Activated CD4-positive, alpha-beta T cell treated with anti-CD3 and anti-CD28 coated beads, Interleukin-2, amount 10 ng/mL, durations not matched to agents 24 days and 14 days (primary cell): ENCODE measurements at regions of chr11 and their contacts with region 1.

Region 1: GRCh38 chr11:62880803-62881578 is at the start of gene SLC3A2:
- DNase-seq: peak; percentile 95
- H3K4me3 Mint-ChIP-seq: peak within 1 kb of the TSS; percentile 100
- H3K27ac Mint-ChIP-seq: peak within 1 kb of the TSS; percentile 100
- H3K4me1 Mint-ChIP-seq: peaks cover 53% of the 10 kb centered on the region
- H3K27me3 Mint-ChIP-seq: peaks cover 1% of the 10 kb centered on the region
- total RNA-seq, gene SLC3A2: 364 and 379 TPM in 2 replicates

Region 2: DNA sequence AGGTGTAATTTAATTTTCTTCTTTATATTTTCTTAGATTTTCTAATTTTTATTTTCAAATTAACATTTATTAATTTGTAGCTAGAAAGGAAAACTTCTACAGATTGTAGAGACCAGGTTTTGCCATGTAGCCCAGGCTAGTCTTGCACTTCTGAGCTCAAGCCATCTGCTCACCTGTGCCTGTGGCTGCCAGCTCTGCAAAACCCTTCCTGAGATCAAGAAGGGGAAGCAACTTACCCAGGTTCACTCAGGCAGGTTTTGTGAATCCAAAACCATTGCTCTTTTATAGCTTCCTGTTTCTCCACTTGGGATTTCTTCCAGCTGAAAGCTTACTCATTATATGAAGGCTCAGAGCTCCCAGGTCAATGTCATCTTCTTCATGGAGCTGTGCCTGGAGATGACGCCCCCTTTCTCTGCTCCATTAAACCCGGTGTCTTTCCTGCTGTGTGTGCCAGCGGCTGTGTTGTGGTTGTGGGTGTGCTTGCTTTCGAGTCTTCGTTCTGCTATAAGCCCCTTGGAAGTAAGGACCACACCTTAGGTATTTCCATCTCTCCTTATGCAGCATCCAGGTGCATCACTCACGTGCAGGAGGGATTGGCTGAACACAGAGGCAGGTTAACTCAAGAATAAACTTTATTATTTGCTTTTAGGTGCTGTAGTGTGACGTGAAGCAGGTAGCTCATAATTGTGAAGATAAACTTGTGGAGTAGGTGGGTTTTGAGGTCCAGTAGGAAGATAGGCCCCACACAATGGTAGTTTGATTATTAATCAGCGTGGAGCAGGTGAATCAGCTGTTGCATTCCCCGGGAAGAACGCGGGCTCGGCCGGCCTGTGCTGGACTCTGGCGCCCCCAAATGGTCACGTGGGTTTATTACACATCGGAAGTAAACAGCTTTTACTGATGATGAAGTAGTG is 799.4 kb before region 1 on chr11:
- intact Hi-C with region 1: no loop called
- DNase-seq: peak; percentile 93
- H3K4me3 Mint-ChIP-seq: peak overlapping the region; percentile 17
- H3K27ac Mint-ChIP-seq: no peak overlapping the region
- H3K4me1 Mint-ChIP-seq: peaks cover 6% of the 10 kb centered on the region
- H3K27me3 Mint-ChIP-seq: peaks cover 6% of the 10 kb centered on the region

Region 3: GRCh38 chr11:62591448-62592145 is 289.4 kb before region 1 on chr11 and contains the start of gene TUT1:
- intact Hi-C with region 1: loop called (anchors 1 kb)
- DNase-seq: peak; percentile 99
- H3K4me3 Mint-ChIP-seq: peak within 1 kb of the TSS; percentile 100
- H3K27ac Mint-ChIP-seq: peak within 1 kb of the TSS; percentile 99
- H3K4me1 Mint-ChIP-seq: peaks cover 38% of the 10 kb centered on the region
- H3K27me3 Mint-ChIP-seq: no peaks in the 10 kb centered on the region
- total RNA-seq, gene TUT1: 45.3 and 50.9 TPM in 2 replicates

Region 4: DNA sequence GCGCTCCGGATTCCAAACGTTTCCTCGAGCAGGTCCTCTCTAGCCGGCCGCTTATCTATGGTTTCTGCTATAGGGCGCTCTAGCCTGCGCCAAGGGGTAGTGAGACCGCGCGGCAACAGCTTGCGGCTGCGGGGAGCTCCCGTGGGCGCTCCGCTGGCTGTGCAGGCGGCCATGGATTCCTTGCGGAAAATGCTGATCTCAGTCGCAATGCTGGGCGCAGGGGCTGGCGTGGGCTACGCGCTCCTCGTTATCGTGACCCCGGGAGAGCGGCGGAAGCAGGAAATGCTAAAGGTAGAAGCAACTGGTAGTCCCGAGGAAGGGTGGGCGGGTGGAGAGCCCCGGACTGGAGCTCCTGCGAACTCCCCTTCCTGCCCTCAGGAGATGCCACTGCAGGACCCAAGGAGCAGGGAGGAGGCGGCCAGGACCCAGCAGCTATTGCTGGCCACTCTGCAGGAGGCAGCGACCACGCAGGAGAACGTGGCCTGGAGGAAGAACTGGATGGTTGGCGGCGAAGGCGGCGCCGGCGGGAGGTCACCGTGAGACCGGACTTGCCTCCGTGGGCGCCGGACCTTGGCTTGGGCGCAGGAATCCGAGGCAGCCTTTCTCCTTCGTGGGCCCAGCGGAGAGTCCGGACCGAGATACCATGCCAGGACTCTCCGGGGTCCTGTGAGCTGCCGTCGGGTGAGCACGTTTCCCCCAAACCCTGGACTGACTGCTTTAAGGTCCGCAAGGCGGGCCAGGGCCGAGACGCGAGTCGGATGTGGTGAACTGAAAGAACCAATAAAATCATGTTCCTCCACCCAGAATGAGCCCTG is 209.2 kb before region 1 on chr11 and contains the starts of genes LBHD1 and UQCC3:
- intact Hi-C with region 1: loop called (anchors 1 kb)
- DNase-seq: peak; percentile 94
- H3K4me3 Mint-ChIP-seq: peak within 1 kb of the TSS; percentile 88
- H3K27ac Mint-ChIP-seq: peak within 1 kb of the TSS; percentile 92
- H3K4me1 Mint-ChIP-seq: peaks cover 38% of the 10 kb centered on the region
- H3K27me3 Mint-ChIP-seq: no peaks in the 10 kb centered on the region
- total RNA-seq, gene LBHD1: 21.5 and 23.0 TPM in 2 replicates
- total RNA-seq, gene UQCC3: 8.6 and 9.4 TPM in 2 replicates

Region 5: GRCh38 chr11:62705880-62706849 is 174.8 kb before region 1 on chr11:
- intact Hi-C with region 1: no loop called
- DNase-seq: peak; percentile 97
- H3K4me3 Mint-ChIP-seq: peak overlapping the region; percentile 96
- H3K27ac Mint-ChIP-seq: peak overlapping the region; percentile 89
- H3K4me1 Mint-ChIP-seq: peaks cover 33% of the 10 kb centered on the region
- H3K27me3 Mint-ChIP-seq: no peaks in the 10 kb centered on the region

Region 6: DNA sequence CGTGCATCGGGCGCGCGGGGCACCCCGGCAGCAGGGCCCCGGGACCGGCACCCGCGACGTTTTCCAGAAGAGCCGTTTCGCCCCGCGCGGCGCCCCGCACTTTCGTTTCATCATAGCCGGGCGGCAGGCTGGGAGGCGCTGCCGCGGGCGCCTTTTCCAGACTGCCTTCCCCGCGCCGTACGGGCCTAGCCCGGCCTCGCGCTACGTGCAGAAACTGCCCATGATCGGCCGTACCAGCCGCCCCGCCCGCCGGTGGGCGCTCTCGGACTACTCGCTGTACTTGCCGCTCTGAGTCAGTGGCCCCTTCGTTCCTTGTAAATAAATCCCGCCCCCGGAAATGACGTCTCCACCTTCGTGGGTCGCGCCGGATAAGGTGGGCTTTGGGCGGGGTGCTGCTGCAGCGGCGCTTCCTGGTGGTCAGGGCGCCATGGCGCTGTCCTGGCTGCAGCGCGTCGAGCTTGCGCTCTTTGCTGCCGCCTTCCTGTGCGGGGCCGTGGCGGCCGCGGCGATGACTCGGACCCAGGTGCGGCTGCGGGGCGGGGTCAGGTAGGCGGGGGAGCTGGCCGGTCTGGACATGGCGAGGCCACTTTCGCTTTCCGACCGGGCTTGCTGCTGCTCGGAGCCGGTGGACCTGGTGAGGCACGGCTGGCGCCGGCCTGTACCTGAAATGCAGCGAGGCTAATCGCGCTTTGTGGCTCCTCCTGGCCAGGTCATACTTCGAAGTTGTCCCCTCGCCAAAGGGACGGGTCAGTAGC is 93.8 kb before region 1 on chr11 and contains the start of gene TMEM179B:
- intact Hi-C with region 1: loop called (anchors 1 kb)
- DNase-seq: peak; percentile 99
- H3K4me3 Mint-ChIP-seq: peak within 1 kb of the TSS; percentile 93
- H3K27ac Mint-ChIP-seq: peak within 1 kb of the TSS; percentile 92
- H3K4me1 Mint-ChIP-seq: peaks cover 37% of the 10 kb centered on the region
- H3K27me3 Mint-ChIP-seq: no peaks in the 10 kb centered on the region
- total RNA-seq, gene TMEM179B: 32.9 and 36.3 TPM in 2 replicates

Region 7: DNA sequence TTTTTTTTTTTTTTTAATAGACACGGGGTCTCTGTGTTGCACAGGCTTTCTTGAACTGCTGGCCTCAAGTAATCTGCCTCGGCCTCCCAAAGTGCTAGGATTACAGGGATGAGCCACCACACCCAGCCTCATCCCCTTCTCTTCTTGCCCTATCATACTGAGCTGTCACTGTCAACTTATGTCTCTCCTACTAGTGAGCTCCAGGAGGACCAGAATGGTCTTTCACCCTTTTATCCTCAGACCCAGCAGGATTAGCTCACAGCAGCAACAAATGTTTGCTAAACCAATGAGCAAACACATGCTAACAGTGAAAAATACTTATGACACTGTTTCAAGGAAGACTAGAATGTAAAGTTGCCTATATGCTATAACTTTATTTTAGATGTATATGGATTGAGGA is 69.3 kb before region 1 on chr11:
- intact Hi-C with region 1: no loop called
- DNase-seq: no peak
- H3K4me3 Mint-ChIP-seq: no peak overlapping the region
- H3K27ac Mint-ChIP-seq: no peak overlapping the region
- H3K4me1 Mint-ChIP-seq: peaks cover 2% of the 10 kb centered on the region
- H3K27me3 Mint-ChIP-seq: no peaks in the 10 kb centered on the region

Region 8: GRCh38 chr11:62841361-62842184 is 39.4 kb before region 1 on chr11:
- intact Hi-C with region 1: loop called (anchors 1 kb)
- DNase-seq: peak; percentile 95
- H3K4me3 Mint-ChIP-seq: no peak overlapping the region
- H3K27ac Mint-ChIP-seq: no peak overlapping the region
- H3K4me1 Mint-ChIP-seq: peaks cover 26% of the 10 kb centered on the region
- H3K27me3 Mint-ChIP-seq: no peaks in the 10 kb centered on the region

Region 9: DNA sequence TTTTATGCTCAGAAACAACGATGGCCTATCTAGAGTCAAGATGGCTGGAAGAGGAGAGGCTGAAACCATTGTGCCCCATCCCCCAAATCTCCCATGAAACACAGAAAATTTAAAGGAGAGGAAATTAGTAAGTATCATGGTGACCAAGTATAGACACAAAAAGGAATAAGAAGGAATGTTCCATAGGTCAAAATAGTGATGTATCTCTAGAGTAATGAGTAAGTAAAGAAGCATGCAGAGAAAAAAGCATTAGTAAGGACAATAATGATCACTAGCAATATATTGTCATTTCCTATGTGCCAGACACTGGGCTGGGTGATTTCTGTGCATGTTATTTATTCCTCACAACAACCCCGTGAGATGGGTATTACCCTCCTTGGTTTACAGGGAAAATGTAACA is 265.6 kb after region 1 on chr11:
- intact Hi-C with region 1: no loop called
- DNase-seq: no peak
- H3K4me3 Mint-ChIP-seq: no peak overlapping the region
- H3K27ac Mint-ChIP-seq: no peak overlapping the region
- H3K4me1 Mint-ChIP-seq: no peaks in the 10 kb centered on the region
- H3K27me3 Mint-ChIP-seq: peaks cover 9% of the 10 kb centered on the region

Region 10: DNA sequence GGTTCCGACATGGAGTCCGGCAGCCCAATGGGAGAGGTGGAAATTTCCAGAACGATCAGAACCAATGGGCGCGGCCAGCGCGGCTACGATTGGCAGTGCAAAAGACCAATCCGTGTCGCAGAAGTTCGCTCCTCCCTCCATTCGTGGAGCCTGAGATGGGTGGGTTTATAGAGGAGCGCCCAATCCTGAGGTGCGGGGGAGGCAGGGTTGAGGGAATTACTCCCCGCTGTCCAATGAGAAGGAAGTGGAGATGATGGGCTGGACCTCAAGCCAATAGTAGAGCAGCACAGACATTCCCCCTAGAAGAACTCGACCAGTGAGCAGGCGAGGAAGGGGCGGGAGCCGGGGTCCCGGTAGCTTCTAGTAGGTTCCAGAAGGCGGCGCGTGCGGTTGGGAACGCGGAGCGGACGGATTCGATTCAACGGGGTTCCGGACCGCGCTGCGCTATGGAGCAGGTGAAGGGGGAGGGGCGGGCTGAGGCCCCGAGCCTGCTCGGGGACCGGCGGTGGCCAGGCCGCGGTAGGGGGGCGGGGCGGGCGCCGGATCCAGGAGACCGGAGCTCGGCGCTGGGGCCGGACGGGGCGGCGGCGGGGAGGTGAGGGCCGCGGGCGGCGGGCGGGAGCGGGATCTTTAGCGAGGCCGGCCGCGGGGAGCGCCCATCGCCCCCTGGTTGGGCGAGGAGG is 1305.0 kb after region 1 on chr11 and contains the start of gene STIP1:
- intact Hi-C with region 1: loop called (anchors 10 kb)
- DNase-seq: peak; percentile 99
- H3K4me3 Mint-ChIP-seq: no peak within 1 kb of the TSS
- H3K27ac Mint-ChIP-seq: peak within 1 kb of the TSS; percentile 98
- H3K4me1 Mint-ChIP-seq: peaks cover 31% of the 10 kb centered on the region
- H3K27me3 Mint-ChIP-seq: peaks cover 4% of the 10 kb centered on the region
- total RNA-seq, gene STIP1: 521 and 535 TPM in 2 replicates